MCF 10A (cell line): ENCODE measurements at regions of chr20 and their contacts with region 1.

Region 1: GRCh38 chr20:38221119-38221589 is 39.4 kb downstream of the KIAA1755 start:
- DNase-seq: peak; percentile 70
- H3K4me3 Mint-ChIP-seq: no peak overlapping the region
- H3K27ac Mint-ChIP-seq: no peak overlapping the region
- H3K4me1 Mint-ChIP-seq: peaks cover 21% of the 10 kb centered on the region
- H3K27me3 Mint-ChIP-seq: no peaks in the 10 kb centered on the region
- CTCF ChIP-seq: peak; percentile 92

Region 2: DNA sequence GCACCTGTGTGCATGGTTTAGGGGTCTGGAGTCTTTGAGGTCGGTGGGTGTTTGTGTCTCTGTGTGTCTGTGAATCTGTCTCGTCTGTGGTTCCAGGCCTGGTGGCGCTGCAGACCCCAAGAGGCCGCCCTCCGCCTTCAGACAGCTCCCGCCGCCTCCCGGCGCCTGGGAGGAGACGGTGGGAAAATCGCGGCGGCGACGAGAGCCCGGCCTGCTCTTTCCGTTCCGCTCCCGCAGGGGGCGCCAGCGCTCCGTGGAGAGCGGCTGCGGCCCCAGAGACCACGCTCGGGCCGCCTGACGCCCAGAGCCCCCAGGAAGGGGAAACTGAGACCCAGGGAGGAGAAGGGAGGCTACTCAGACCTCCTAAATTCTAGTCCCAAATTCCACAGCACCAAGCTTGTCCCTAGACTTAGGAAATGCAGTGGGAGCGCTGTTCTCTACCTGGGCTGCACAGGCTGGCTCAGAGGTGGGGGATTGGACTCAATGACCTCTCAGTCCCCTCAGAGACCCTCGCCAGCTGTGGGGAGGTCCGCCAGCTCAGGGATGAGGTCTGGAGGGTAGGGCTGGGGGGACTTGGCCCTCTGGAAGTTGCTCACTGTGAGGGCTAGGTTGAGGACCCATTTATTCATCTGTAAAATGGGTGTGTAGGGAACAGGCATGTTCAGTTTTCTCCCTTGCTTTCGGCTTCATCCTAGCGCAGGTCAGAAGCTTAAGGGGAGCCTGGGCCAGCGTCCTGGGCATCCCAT is 656.6 kb before region 1 on chr20:
- CTCF ChIA-PET with region 1: interaction called, 37 read pairs
- POLR2A ChIA-PET with region 1: no interaction called
- intact Hi-C with region 1: no loop called
- DNase-seq: peak; percentile 42
- H3K4me3 Mint-ChIP-seq: no peak overlapping the region
- H3K27ac Mint-ChIP-seq: no peak overlapping the region
- H3K4me1 Mint-ChIP-seq: no peaks in the 10 kb centered on the region
- H3K27me3 Mint-ChIP-seq: peaks cover 61% of the 10 kb centered on the region
- CTCF ChIP-seq: peak; percentile 98

Region 3: GRCh38 chr20:38057351-38057972 is 163.7 kb before region 1 on chr20:
- CTCF ChIA-PET with region 1: interaction called, 782 read pairs
- POLR2A ChIA-PET with region 1: interaction called, 17 read pairs
- intact Hi-C with region 1: loop called (anchors 1 kb)
- DNase-seq: peak; percentile 88
- H3K4me3 Mint-ChIP-seq: no peak overlapping the region
- H3K27ac Mint-ChIP-seq: no peak overlapping the region
- H3K4me1 Mint-ChIP-seq: peaks cover 11% of the 10 kb centered on the region
- H3K27me3 Mint-ChIP-seq: no peaks in the 10 kb centered on the region
- CTCF ChIP-seq: peak; percentile 87

Region 4: DNA sequence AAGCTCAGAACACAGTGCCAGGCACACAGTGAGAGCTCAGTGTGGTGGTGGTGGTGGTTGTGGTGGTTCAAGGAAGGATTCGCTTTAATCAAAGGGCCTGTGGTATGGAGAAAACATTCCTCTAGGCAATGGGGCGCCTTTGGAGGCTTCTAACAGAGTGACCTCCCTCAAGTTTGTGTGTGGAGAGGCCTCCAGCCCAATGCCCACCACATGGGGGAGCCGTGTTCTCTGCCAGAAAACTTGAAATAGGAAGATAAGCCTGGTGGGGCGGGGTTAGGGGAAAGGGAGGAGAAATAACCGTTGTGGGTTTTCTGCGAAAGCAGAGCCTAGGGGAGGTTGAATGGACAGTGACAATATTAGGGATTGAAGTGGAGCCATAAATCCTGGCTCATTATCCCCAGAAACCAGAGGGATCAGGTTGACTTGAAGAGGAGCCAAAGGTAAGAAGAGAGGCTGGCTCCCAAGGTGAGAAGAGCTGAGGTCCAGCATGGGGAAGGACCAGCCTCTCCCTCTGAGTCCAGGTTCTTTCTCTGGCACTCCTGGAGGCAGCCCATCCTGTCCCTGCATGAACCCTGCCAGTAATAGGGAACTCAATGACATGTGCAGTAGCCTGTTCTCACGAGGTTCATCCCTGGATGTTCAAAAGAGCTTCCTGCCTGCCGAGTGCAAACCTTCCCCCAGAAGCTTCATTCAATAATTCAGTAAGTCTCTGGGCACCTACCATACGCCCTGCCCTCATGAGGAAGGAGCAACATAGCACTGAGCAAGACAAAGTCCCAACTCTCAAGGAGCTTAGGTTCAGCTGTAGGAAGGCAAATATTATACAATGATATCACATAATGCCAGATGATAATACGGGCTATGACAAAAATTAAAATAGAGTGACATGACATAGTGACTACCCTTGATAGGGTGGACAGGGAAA is 107.5 kb before region 1 on chr20:
- CTCF ChIA-PET with region 1: interaction called, 71 read pairs
- POLR2A ChIA-PET with region 1: no interaction called
- intact Hi-C with region 1: no loop called
- DNase-seq: peak; percentile 54
- H3K4me3 Mint-ChIP-seq: no peak overlapping the region
- H3K27ac Mint-ChIP-seq: no peak overlapping the region
- H3K4me1 Mint-ChIP-seq: peaks cover 41% of the 10 kb centered on the region
- H3K27me3 Mint-ChIP-seq: no peaks in the 10 kb centered on the region
- CTCF ChIP-seq: no peak

Region 5: GRCh38 chr20:38165089-38165989 is 55.8 kb before region 1 on chr20 and contains the start of gene TGM2:
- CTCF ChIA-PET with region 1: interaction called, 146 read pairs
- POLR2A ChIA-PET with region 1: interaction called, 17 read pairs
- intact Hi-C with region 1: loop called (anchors 1 kb)
- DNase-seq: peak; percentile 75
- H3K4me3 Mint-ChIP-seq: peak within 1 kb of the TSS; percentile 11
- H3K27ac Mint-ChIP-seq: peak within 1 kb of the TSS; percentile 61
- H3K4me1 Mint-ChIP-seq: peaks cover 41% of the 10 kb centered on the region
- H3K27me3 Mint-ChIP-seq: no peaks in the 10 kb centered on the region
- CTCF ChIP-seq: peak; percentile 75
- total RNA-seq, gene TGM2: 0.76 and 1.5 TPM in 2 replicates

Region 6: DNA sequence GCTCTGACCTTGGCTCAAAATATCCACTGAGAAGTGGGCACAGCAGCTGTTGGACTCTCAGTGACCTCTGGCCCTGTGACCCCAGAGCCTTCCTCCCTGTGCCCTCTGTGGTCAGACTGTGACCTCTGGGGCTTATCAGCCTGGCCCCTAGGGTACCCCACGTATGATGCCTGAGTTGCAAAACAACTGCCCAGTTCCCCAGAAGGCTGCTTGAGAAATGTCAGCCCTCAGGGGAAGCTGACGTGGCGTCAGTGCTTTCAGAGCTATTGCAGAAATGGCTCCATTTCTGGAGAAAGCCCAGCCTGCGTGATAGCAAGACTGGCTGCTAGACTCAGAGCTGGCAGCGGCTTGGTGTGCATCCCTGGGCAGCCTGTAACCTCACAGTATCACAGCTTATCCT is 24.6 kb before region 1 on chr20:
- CTCF ChIA-PET with region 1: interaction called, 198 read pairs
- POLR2A ChIA-PET with region 1: interaction called, 12 read pairs
- intact Hi-C with region 1: no loop called
- DNase-seq: peak; percentile 82
- H3K4me3 Mint-ChIP-seq: no peak overlapping the region
- H3K27ac Mint-ChIP-seq: peak overlapping the region; percentile 3
- H3K4me1 Mint-ChIP-seq: peaks cover 39% of the 10 kb centered on the region
- H3K27me3 Mint-ChIP-seq: no peaks in the 10 kb centered on the region
- CTCF ChIP-seq: no peak

Region 7: GRCh38 chr20:38270869-38271605 is 49.9 kb after region 1 on chr20:
- CTCF ChIA-PET with region 1: interaction called, 13 read pairs
- POLR2A ChIA-PET with region 1: no interaction called
- intact Hi-C with region 1: no loop called
- DNase-seq: peak; percentile 96
- H3K4me3 Mint-ChIP-seq: no peak overlapping the region
- H3K27ac Mint-ChIP-seq: peak overlapping the region; percentile 28
- H3K4me1 Mint-ChIP-seq: peaks cover 30% of the 10 kb centered on the region
- H3K27me3 Mint-ChIP-seq: no peaks in the 10 kb centered on the region
- CTCF ChIP-seq: no peak